ENCODE measurements at regions of chr6 and their contacts with region 1.

Region 1: DNA sequence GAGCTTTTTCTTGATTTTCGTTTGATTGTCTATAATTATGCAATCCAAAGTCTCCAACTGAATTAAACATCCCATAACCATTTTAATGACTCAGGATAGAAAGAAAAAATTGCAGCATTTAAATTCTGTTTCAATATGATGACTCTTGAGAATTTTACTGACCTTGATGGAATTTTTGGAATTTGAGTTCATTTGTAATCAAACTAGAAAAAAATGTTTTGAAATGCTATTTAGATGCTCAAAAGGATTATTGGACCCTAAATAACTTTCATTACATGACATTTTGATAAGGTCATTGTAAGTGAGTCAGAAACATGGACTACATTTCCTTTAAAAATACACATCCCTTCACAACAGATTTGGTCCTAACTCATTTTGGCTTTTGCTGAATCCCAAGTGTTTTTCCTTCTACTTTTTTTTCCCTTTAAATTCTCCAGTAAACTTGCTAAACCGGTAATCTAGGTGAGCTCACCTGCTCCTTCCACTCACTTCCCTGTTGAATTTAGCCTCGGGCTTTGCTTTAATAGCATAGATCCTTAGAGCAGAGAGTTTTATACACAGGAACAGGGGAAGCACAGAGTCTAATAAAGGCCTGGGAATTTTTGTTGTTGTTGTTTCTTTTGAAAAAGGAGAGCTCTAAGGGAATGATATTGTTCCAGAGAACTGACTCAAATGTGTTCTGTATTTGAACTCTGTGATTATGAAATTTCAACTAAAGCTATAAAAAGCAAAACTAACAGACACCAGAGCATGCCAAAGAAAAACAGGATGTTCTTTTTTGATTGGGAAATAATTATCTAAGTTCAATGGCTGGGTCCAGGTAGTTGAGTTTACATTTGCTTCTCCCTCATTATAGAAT is 1088.2 kb upstream of the CITED2 start:
- DNase-seq: peak; percentile 40 to 99
- H3K4me3 ChIP-seq: peak overlapping the region; percentile 35; the same call in 1 of the 2 replicates
- H3K27ac ChIP-seq: peak overlapping the region; percentile 91
- H3K4me1 ChIP-seq: peaks cover 39% of the 10 kb centered on the region
- H3K27me3 ChIP-seq: no peaks in the 10 kb centered on the region
- CTCF ChIP-seq: no peak

Region 2: GRCh38 chr6:139970591-139970991 is 492.1 kb before region 1 on chr6:
- CTCF ChIA-PET with region 1: no interaction called
- POLR2A ChIA-PET with region 1: interaction called, 19 read pairs
- intact Hi-C with region 1: no loop called
- DNase-seq: peak in 1 of 2 experiments; percentile 74
- H3K4me3 ChIP-seq: no peak overlapping the region
- H3K27ac ChIP-seq: peak overlapping the region; percentile 18; the same call in 1 of the 2 replicates
- H3K4me1 ChIP-seq: peaks cover 9% of the 10 kb centered on the region
- H3K27me3 ChIP-seq: no peaks in the 10 kb centered on the region
- CTCF ChIP-seq: no peak

Region 3: GRCh38 chr6:140062043-140063020 is 400.4 kb before region 1 on chr6:
- CTCF ChIA-PET with region 1: no interaction called
- POLR2A ChIA-PET with region 1: no interaction called
- intact Hi-C with region 1: loop called (anchors 5 kb)
- DNase-seq: peak; percentile 51 to 97
- H3K4me3 ChIP-seq: peak overlapping the region; percentile 4; the same call in 1 of the 2 replicates
- H3K27ac ChIP-seq: peak overlapping the region; percentile 66
- H3K4me1 ChIP-seq: peaks cover 32% of the 10 kb centered on the region
- H3K27me3 ChIP-seq: no peaks in the 10 kb centered on the region
- CTCF ChIP-seq: no peak

Region 4: GRCh38 chr6:140537819-140538705 is 75.4 kb after region 1 on chr6:
- CTCF ChIA-PET with region 1: no interaction called
- POLR2A ChIA-PET with region 1: no interaction called
- intact Hi-C with region 1: loop called (anchors 2 kb)
- DNase-seq: peak; percentile 63 to 87
- H3K4me3 ChIP-seq: peak overlapping the region; percentile 16; the same call in 1 of the 2 replicates
- H3K27ac ChIP-seq: peak overlapping the region; percentile 76
- H3K4me1 ChIP-seq: peaks cover 25% of the 10 kb centered on the region
- H3K27me3 ChIP-seq: no peaks in the 10 kb centered on the region
- CTCF ChIP-seq: no peak

Region 5: GRCh38 chr6:140929121-140929520 is 466.4 kb after region 1 on chr6:
- CTCF ChIA-PET with region 1: no interaction called
- POLR2A ChIA-PET with region 1: no interaction called
- intact Hi-C with region 1: no loop called
- DNase-seq: no peak
- H3K4me3 ChIP-seq: no peak overlapping the region
- H3K27ac ChIP-seq: no peak overlapping the region
- H3K4me1 ChIP-seq: no peaks in the 10 kb centered on the region
- H3K27me3 ChIP-seq: no peaks in the 10 kb centered on the region
- CTCF ChIP-seq: no peak

Measured in PC-9 (cell line).